Transverse colon (tissue), 4 donors: ENCODE measurements at regions of chr1 and their contacts with region 1.

Region 1: DNA sequence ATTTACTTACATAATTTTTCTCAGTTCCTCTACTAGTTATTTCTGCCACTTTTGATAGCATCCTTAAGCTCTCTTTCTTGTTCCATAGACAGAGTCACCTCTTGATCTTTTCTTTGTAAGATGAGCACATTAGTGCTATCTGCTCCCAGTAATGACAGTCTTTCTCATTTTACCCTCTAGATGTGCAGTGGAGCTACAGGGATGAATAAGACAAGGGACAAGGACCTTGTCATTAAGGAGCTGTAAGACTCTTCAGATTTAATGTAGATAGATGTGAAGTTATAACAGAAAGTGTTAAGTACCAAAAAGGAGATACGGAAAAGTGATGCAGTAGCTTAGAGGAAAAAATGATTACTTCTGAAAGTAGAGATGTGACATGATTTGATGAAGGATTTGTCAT is 20.4 kb downstream of the SCP2 start:
- DNase-seq: no peak
- H3K4me3 ChIP-seq: no peak overlapping the region
- H3K27ac ChIP-seq: peak overlapping the region in 1 of 4 donors; percentile 34
- H3K4me1 ChIP-seq: peaks cover 0 to 2% (median 0%) of the 10 kb centered on the region in 4 donors
- H3K27me3 ChIP-seq: no peaks in the 10 kb centered on the region
- CTCF ChIP-seq: no peak
- EP300 ChIP-seq: no peak
- POLR2A ChIP-seq: no peak

Region 2: GRCh38 chr1:52973841-52974240 is 26.4 kb after region 1 on chr1:
- in situ Hi-C with region 1: no loop called
- intact Hi-C with region 1: loop called (anchors 1 kb)
- DNase-seq: no peak
- H3K4me3 ChIP-seq: no peak overlapping the region
- H3K27ac ChIP-seq: no peak overlapping the region
- H3K4me1 ChIP-seq: no peaks in the 10 kb centered on the region
- H3K27me3 ChIP-seq: no peaks in the 10 kb centered on the region
- CTCF ChIP-seq: no peak
- EP300 ChIP-seq: no peak
- POLR2A ChIP-seq: no peak

Region 3: GRCh38 chr1:52996653-52997052 is 49.2 kb after region 1 on chr1:
- in situ Hi-C with region 1: no loop called
- intact Hi-C with region 1: no loop called
- DNase-seq: no peak
- H3K4me3 ChIP-seq: no peak overlapping the region
- H3K27ac ChIP-seq: no peak overlapping the region
- H3K4me1 ChIP-seq: no peaks in the 10 kb centered on the region
- H3K27me3 ChIP-seq: no peaks in the 10 kb centered on the region
- CTCF ChIP-seq: no peak
- EP300 ChIP-seq: no peak
- POLR2A ChIP-seq: no peak